ENCODE measurements at regions of chr11 and their contacts with region 1.

Region 1: DNA sequence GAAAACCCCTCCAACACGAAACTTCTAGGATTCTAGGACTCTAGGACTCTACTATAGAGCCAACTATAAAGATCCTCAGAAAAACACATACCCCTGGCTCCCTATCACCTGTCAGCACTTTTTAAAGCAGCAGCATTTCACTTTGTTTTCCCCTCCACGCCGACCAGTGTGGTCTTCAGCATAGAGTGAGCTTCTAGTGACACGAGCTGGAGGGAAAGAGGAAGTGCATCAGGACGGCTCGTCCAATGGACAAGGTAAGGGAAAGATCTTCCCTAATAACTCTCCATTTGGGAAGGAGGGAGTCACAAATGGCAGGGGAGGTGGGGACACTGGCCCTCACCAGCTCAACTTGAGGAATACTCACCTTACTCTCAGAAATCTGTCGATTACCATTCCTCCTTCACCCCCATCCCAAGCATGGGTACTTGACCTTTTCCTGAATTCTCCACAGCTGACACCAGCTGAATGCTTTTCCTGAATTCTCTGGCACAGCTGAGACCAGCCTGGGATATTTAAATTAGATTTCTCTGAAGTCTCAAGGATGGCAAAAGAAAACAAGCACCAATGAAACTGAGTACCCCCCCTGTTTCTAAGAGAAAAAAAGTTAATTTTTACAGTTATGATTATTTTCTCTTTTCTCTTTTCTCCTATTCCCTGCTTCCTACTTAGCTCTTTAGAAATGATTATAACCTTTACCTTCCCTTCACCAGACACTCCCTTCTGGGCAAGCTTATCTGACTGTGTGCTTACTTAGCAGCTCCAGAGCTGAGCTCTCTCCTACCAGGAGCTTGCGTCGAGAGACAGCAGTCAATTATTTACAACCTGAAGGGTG is 33.3 kb upstream of the NNMT start:
- DNase-seq: peak in 3 of 5 donors; percentile 17 to 58 (median 21)
- H3K4me3 ChIP-seq: no peak overlapping the region
- H3K4me3 Mint-ChIP-seq: no peak overlapping the region
- H3K27ac ChIP-seq: no peak overlapping the region
- H3K27ac Mint-ChIP-seq: no peak overlapping the region
- H3K4me1 ChIP-seq: no peaks in the 10 kb centered on the region
- H3K4me1 Mint-ChIP-seq: peaks cover 0 to 6% (median 4%) of the 10 kb centered on the region in 3 donors
- H3K27me3 ChIP-seq: no peaks in the 10 kb centered on the region
- H3K27me3 Mint-ChIP-seq: peaks cover 4 to 6% of the 10 kb centered on the region in 2 donors

Region 2: DNA sequence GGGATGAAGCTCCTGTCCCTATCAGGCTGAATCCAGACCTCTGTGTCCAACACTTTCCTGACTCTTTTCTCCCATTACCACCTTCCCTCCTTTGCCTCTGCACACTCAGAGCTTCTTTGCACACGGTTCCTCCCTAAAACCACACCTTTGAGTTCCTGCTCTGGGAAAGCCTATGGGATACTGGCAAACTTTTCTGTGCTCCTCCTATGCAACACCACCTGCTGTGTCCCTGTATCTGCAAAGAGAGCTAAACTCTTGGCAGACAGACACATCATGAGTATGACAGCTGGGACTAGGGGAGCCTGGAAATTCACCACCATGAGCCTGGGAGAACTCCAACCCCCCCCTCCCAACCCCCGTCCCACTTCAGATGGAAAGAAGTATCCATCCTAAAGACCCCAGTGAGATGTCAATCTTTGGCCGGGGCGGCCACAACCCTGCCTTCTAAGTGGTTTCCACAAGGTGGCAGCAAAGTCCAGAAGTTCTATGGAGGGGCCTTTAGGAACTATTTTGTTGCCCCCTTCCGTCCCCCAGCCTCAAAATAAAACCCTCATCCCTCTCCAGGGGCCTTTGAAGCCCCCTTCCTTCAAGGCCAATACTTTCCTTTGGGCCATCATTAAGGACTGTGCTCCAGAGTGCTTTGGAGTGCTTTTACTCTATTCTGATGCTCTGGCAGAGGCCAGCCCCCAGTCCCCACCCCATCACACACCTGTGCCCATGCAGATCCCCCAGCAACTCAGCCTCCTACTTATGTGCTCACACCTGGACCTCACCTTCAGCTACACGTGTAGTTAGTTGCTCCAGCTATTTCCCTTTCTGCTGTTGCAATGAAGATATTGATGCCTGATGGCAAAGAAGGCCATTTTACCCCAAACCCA is 268.6 kb before region 1 on chr11:
- CTCF ChIA-PET with region 1: interaction called, 149 read pairs
- POLR2A ChIA-PET with region 1: no interaction called
- DNase-seq: peak; percentile 9 to 58 (median 23)
- H3K4me3 ChIP-seq: no peak overlapping the region
- H3K4me3 Mint-ChIP-seq: no peak overlapping the region
- H3K27ac ChIP-seq: no peak overlapping the region
- H3K27ac Mint-ChIP-seq: no peak overlapping the region
- H3K4me1 ChIP-seq: no peaks in the 10 kb centered on the region
- H3K4me1 Mint-ChIP-seq: no peaks in the 10 kb centered on the region
- H3K27me3 ChIP-seq: peaks cover 17% of the 10 kb centered on the region
- H3K27me3 Mint-ChIP-seq: peaks cover 30 to 42% of the 10 kb centered on the region in 2 donors

Region 3: GRCh38 chr11:114036156-114036811 is 226.6 kb before region 1 on chr11:
- CTCF ChIA-PET with region 1: interaction called, 180 read pairs
- POLR2A ChIA-PET with region 1: no interaction called
- DNase-seq: peak; percentile 19 to 57 (median 42)
- H3K4me3 ChIP-seq: no peak overlapping the region
- H3K4me3 Mint-ChIP-seq: peak overlapping the region in 1 of 7 donors; percentile 29
- H3K27ac ChIP-seq: no peak overlapping the region
- H3K27ac Mint-ChIP-seq: peak overlapping the region in 1 of 8 donors; percentile 47
- H3K4me1 ChIP-seq: peaks cover 10% of the 10 kb centered on the region
- H3K4me1 Mint-ChIP-seq: peaks cover 5 to 8% (median 7%) of the 10 kb centered on the region in 3 donors
- H3K27me3 ChIP-seq: no peaks in the 10 kb centered on the region
- H3K27me3 Mint-ChIP-seq: peaks cover 10 to 16% of the 10 kb centered on the region in 2 donors

Region 4: DNA sequence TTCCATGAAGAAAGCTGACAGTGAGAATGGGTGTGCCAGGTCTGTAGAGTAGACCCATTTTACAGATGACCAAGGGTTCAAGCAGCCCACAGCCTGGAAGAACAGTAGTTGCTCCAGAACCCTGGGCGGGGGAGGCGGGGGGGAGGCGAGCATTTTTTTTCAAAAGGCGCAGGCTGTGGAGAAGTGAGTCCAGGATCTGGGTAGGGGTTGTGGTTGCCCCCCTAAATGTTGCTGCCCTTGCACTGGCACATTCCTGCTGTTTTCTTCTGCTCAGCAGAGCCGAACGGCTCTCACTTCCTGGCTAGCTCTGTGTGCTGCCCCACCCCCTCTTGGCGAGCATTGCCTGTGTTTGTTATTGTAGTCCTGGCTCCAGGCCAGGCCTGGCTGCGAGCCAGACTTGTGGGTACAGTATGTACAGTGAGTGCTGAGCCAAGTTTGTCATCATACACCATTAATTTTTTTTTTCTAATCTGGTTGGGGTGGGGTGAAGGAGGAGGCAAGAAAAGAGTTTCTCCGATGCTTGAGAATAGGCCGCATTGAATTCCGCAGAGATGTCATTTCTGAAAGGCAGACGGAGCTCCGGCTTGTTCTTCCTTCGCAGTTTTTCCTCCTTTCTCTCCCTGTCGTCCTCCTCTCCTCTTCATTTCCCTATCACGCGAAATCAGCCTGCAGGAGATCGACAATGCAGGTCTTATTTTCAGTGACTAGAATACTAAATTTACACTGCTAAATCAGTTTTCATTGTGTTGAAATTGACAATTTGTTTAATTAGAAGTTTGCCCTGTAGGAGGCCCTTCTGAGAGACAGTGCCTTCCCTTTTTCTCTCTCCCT is 102.9 kb before region 1 on chr11:
- CTCF ChIA-PET with region 1: interaction called, 35 read pairs
- POLR2A ChIA-PET with region 1: no interaction called
- DNase-seq: peak; percentile 91 to 99 (median 97)
- H3K4me3 ChIP-seq: peak overlapping the region; percentile 38
- H3K4me3 Mint-ChIP-seq: peak overlapping the region; percentile 69 to 89 (median 81)
- H3K27ac ChIP-seq: peak overlapping the region; percentile 7
- H3K27ac Mint-ChIP-seq: peak overlapping the region; percentile 81 to 97 (median 95)
- H3K4me1 ChIP-seq: peaks cover 56% of the 10 kb centered on the region
- H3K4me1 Mint-ChIP-seq: peaks cover 79 to 90% (median 87%) of the 10 kb centered on the region in 3 donors
- H3K27me3 ChIP-seq: no peaks in the 10 kb centered on the region
- H3K27me3 Mint-ChIP-seq: no peaks in the 10 kb centered on the region

Region 5: GRCh38 chr11:114183044-114183511 is 79.8 kb before region 1 on chr11:
- CTCF ChIA-PET with region 1: interaction called, 11 read pairs
- POLR2A ChIA-PET with region 1: no interaction called
- DNase-seq: peak; percentile 44 to 87 (median 70)
- H3K4me3 ChIP-seq: peak overlapping the region; percentile 21
- H3K4me3 Mint-ChIP-seq: peak overlapping the region; percentile 47 to 83 (median 71)
- H3K27ac ChIP-seq: peak overlapping the region; percentile 20
- H3K27ac Mint-ChIP-seq: peak overlapping the region; percentile 86 to 97 (median 96)
- H3K4me1 ChIP-seq: peaks cover 66% of the 10 kb centered on the region
- H3K4me1 Mint-ChIP-seq: peaks cover 84 to 94% (median 92%) of the 10 kb centered on the region in 3 donors
- H3K27me3 ChIP-seq: no peaks in the 10 kb centered on the region
- H3K27me3 Mint-ChIP-seq: peaks cover 0 to 3% of the 10 kb centered on the region in 2 donors

Region 6: GRCh38 chr11:114246321-114247069 is 16.4 kb before region 1 on chr11:
- CTCF ChIA-PET with region 1: interaction called, 23 read pairs
- POLR2A ChIA-PET with region 1: no interaction called
- DNase-seq: no peak
- H3K4me3 ChIP-seq: no peak overlapping the region
- H3K4me3 Mint-ChIP-seq: no peak overlapping the region
- H3K27ac ChIP-seq: no peak overlapping the region
- H3K27ac Mint-ChIP-seq: peak overlapping the region in 7 of 8 donors; percentile 7 to 85 (median 47)
- H3K4me1 ChIP-seq: no peaks in the 10 kb centered on the region
- H3K4me1 Mint-ChIP-seq: peaks cover 0 to 5% (median 0%) of the 10 kb centered on the region in 3 donors
- H3K27me3 ChIP-seq: no peaks in the 10 kb centered on the region
- H3K27me3 Mint-ChIP-seq: peaks cover 0 to 7% of the 10 kb centered on the region in 2 donors

Region 7: DNA sequence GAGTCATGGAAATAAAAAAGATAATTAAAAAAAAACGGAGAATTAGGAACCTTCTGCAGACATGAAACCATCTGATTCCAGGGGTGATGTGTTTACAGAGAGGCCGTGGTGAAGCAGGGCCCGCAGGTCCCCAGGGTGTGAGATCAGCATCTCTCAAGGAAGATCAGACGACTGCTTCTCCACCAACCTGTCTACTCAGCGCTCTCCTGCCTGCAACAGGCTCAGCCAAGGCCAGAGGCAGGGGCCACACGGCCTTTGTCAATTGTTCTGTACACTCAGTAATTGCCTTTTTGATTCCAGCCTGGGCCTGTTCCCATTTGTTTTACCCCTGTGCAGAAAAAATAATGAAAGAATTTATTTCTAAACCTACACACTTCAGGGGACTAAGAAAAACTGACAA is 540.0 kb after region 1 on chr11:
- CTCF ChIA-PET with region 1: no interaction called
- POLR2A ChIA-PET with region 1: no interaction called
- DNase-seq: no peak
- H3K4me3 ChIP-seq: no peak overlapping the region
- H3K4me3 Mint-ChIP-seq: no peak overlapping the region
- H3K27ac ChIP-seq: no peak overlapping the region
- H3K27ac Mint-ChIP-seq: no peak overlapping the region
- H3K4me1 ChIP-seq: no peaks in the 10 kb centered on the region
- H3K4me1 Mint-ChIP-seq: no peaks in the 10 kb centered on the region
- H3K27me3 ChIP-seq: no peaks in the 10 kb centered on the region
- H3K27me3 Mint-ChIP-seq: peaks cover 14 to 30% of the 10 kb centered on the region in 2 donors

Measured in CD8-positive, alpha-beta memory T cell (primary cell).